ENCODE measurements at regions of chr5 and their contacts with region 1.

Region 1: GRCh38 chr5:134592141-134592746 is 40.4 kb downstream of the SAR1B start:
- DNase-seq: no peak
- H3K4me3 ChIP-seq: no peak overlapping the region
- CTCF ChIP-seq: no peak

Region 2: GRCh38 chr5:134524826-134525682 is 67.2 kb before region 1 on chr5 and contains the start of gene JADE2:
- in situ Hi-C with region 1: loop called (anchors 5 kb)
- DNase-seq: no peak
- H3K4me3 ChIP-seq: peak within 1 kb of the TSS; percentile 78
- CTCF ChIP-seq: no peak

Region 3: GRCh38 chr5:134692722-134693121 is 100.5 kb after region 1 on chr5:
- in situ Hi-C with region 1: no loop called
- DNase-seq: no peak
- H3K4me3 ChIP-seq: no peak overlapping the region
- CTCF ChIP-seq: no peak